CD8-positive, alpha-beta T cell (primary cell): ENCODE measurements at regions of chr17 and their contacts with region 1.

Region 1: GRCh38 chr17:39621523-39622379 is 5.0 kb upstream of the PPP1R1B start:
- DNase-seq: peak; percentile 78 to 96 (median 87)
- ATAC-seq: peak; percentile 79
- H3K4me3 ChIP-seq: peak overlapping the region in 1 of 2 experiments; percentile 27
- H3K4me3 Mint-ChIP-seq: peak overlapping the region; percentile 77
- H3K27ac ChIP-seq: peak overlapping the region in 1 of 2 experiments; percentile 17
- H3K27ac Mint-ChIP-seq: peak overlapping the region; percentile 87
- H3K4me1 ChIP-seq: peaks cover 36% of the 10 kb centered on the region
- H3K4me1 Mint-ChIP-seq: peaks cover 23% of the 10 kb centered on the region
- H3K27me3 ChIP-seq: peaks cover 8 to 10% of the 10 kb centered on the region in 2 experiments
- H3K27me3 Mint-ChIP-seq: peaks cover 14% of the 10 kb centered on the region
- CTCF ChIP-seq: peak; percentile 100

Region 2: GRCh38 chr17:39553341-39553945 is 68.3 kb before region 1 on chr17:
- CTCF ChIA-PET with region 1: interaction called, 68 read pairs
- POLR2A ChIA-PET with region 1: interaction called, 3 read pairs
- intact Hi-C with region 1: loop called in 1 of 2 experiments (anchors 1 kb)
- DNase-seq: no peak
- ATAC-seq: no peak
- H3K4me3 ChIP-seq: no peak overlapping the region
- H3K4me3 Mint-ChIP-seq: no peak overlapping the region
- H3K27ac ChIP-seq: no peak overlapping the region
- H3K27ac Mint-ChIP-seq: no peak overlapping the region
- H3K4me1 ChIP-seq: no peaks in the 10 kb centered on the region
- H3K4me1 Mint-ChIP-seq: no peaks in the 10 kb centered on the region
- H3K27me3 ChIP-seq: no peaks in the 10 kb centered on the region
- H3K27me3 Mint-ChIP-seq: no peaks in the 10 kb centered on the region
- CTCF ChIP-seq: no peak

Region 3: DNA sequence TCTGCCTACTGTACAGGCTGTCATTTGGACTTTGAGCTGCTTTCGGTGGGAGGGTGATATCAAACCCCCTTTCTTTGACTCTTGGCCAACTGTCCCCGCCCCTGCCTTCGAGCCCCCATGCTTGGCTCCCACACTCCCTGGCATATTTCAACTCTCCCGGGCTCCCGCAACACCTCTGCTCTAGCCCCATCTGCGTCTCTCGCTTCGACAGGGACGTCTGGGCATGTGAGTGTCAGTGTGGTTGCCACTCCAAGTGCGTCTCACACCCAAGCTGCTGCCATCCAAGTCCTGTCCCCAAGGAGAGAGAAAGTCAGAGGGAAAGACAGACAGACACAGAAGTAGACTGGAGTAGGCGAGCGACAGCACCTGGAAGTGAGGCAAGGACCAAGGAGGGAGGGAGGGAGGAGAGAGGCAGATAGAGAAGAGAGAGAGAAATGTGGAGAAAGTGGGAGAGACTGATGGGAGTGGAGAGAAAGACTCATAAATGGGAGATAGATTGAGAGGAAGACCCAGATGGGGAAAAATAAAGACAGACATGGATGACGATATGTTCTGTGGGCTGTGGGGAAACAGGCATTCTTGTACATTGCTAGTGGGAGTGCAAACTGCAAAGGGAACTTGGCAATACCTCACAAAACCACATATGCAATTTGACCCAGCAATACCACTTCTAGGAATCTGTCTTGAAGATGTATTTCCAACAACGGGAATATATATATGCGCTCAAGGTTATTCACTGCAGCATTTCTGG is 27.0 kb after region 1 on chr17:
- CTCF ChIA-PET with region 1: interaction called, 263 read pairs
- POLR2A ChIA-PET with region 1: no interaction called
- intact Hi-C with region 1: no loop called
- DNase-seq: no peak
- ATAC-seq: no peak
- H3K4me3 ChIP-seq: no peak overlapping the region
- H3K4me3 Mint-ChIP-seq: no peak overlapping the region
- H3K27ac ChIP-seq: no peak overlapping the region
- H3K27ac Mint-ChIP-seq: peak overlapping the region; percentile 67
- H3K4me1 ChIP-seq: peaks cover 18% of the 10 kb centered on the region
- H3K4me1 Mint-ChIP-seq: peaks cover 52% of the 10 kb centered on the region
- H3K27me3 ChIP-seq: no peaks in the 10 kb centered on the region
- H3K27me3 Mint-ChIP-seq: no peaks in the 10 kb centered on the region
- CTCF ChIP-seq: no peak

Region 4: DNA sequence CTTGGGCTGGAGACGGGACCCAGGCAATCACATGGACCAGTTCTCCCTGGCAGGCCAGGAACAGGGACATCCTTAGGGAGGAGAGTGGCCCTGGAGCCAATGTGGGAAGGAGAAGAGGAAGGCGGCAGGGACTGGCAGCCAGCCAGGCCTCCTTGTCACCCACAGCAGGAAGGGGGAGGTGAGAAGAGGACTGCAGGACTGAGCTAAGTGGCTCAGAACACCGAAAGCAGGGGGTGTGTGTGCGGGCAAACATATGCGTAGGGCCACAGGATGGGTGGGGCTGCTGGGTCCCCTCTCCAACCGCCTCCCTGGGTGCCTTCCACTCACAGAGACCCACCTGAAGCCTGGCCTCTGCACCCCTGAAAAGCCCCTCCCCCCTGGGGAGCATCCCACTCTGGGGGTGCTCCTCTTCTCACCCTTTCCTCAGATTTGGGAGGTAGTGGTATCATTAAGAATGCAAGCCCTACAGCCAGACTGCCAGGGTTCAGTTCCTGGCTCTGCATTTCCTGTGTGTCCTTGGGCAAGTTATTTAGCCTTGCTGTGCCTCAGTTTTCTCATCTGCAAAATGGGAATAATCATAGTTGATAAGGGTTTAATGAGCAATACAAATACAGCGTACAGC is 54.6 kb after region 1 on chr17:
- CTCF ChIA-PET with region 1: interaction called, 205 read pairs
- POLR2A ChIA-PET with region 1: interaction called, 3 read pairs
- intact Hi-C with region 1: loop called in 1 of 2 experiments (anchors 1 kb)
- DNase-seq: peak; percentile 24 to 89 (median 61)
- ATAC-seq: peak; percentile 83
- H3K4me3 ChIP-seq: no peak overlapping the region
- H3K4me3 Mint-ChIP-seq: peak overlapping the region; percentile 38
- H3K27ac ChIP-seq: peak overlapping the region; percentile 48 to 88
- H3K27ac Mint-ChIP-seq: peak overlapping the region; percentile 81
- H3K4me1 ChIP-seq: peaks cover 69% of the 10 kb centered on the region
- H3K4me1 Mint-ChIP-seq: peaks cover 69% of the 10 kb centered on the region
- H3K27me3 ChIP-seq: no peaks in the 10 kb centered on the region
- H3K27me3 Mint-ChIP-seq: no peaks in the 10 kb centered on the region
- CTCF ChIP-seq: no peak

Region 5: DNA sequence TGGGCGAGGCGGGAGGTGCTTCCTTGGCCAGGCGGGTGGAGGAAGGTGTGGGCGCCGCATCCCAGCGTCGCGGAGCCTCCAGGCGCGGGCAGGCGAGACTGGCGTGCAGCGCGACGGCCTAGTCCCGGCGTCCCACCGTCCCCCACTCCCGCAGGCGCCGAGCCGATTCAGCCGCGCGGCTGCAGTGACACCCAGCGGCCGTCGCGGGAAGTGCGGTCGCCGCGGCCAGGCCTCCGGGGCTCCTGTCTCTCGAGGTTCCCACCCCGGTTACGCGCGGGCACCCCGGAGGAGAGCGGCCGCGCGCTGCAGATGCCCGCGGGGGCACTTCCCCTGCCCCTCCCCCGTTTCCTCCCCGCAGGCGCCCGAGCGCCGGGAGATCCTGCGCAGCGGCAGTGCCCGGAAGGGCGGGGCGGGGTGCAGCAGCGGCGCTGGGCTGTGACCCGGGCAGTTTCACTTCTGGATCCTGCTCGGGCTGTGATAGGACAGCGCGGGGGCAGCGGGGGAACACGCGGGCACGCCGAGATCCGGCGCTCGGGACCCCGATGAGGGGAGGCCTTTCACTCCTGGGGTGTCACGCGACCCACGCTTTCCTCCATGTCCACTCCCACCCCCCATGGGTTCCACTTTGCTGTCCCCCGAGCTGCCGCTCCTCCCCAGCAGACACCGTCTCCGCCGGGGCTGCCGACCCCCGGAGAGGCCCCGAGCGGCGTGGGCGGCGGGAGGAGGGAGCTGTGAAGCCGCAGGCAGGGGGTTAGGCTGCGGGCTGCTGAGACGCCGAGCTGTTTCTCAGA is 132.6 kb after region 1 on chr17:
- CTCF ChIA-PET with region 1: interaction called, 110 read pairs
- POLR2A ChIA-PET with region 1: interaction called, 8 read pairs
- intact Hi-C with region 1: loop called (anchors 1 kb)
- DNase-seq: peak; percentile 95 to 99 (median 97)
- ATAC-seq: peak; percentile 74
- H3K4me3 ChIP-seq: peak overlapping the region; percentile 64 to 75
- H3K4me3 Mint-ChIP-seq: peak overlapping the region; percentile 78
- H3K27ac ChIP-seq: peak overlapping the region; percentile 93 to 97
- H3K27ac Mint-ChIP-seq: peak overlapping the region; percentile 98
- H3K4me1 ChIP-seq: peaks cover 56% of the 10 kb centered on the region
- H3K4me1 Mint-ChIP-seq: peaks cover 59% of the 10 kb centered on the region
- H3K27me3 ChIP-seq: no peaks in the 10 kb centered on the region
- H3K27me3 Mint-ChIP-seq: no peaks in the 10 kb centered on the region
- CTCF ChIP-seq: peak; percentile 91

Region 6: DNA sequence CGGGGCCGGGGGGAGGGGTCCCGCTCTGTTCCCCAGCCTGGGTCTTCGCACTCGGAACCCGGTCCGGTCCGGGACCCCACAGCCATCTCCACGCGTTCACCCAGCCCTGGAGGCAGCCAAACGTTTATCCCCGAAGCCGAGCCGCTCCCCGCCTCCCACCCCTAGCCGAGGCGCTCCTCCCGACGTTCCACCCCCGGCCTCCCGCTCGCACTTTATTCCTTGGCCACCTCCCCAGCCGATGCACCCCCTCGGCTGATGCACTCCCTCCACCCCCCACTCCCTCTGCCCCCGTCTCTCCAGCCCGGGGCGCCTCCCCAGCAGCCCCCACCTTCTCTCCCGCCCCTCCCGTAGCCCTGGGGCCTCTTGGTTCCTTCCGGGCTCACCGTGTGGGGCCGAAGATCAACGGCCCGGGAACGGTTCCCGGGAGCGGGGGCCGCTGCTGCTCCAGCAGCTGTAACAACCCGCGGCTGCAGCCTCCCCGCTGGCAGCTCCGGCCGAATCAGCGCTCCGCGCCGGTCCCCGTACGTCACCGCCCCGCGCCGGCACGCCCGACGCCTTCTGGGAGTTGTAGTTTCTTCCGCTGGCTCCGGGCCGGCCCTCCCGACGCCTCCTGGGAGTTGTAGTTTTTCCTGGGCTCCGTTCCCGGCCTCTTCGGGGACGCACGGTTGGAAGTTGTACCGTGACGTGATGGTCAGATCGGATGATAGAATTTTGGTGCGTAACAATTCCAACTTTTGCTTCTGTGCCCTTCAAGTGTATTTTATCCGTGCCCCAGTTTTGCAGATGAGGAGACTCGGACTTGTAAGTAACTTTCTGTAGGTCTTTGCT is 305.6 kb after region 1 on chr17 and contains the starts of genes LRRC3C and ORMDL3:
- CTCF ChIA-PET with region 1: interaction called, 5 read pairs
- POLR2A ChIA-PET with region 1: interaction called, 3 read pairs
- intact Hi-C with region 1: loop called (anchors 1 to 5 kb)
- DNase-seq: peak; percentile 80 to 96 (median 91)
- ATAC-seq: peak; percentile 70
- H3K4me3 ChIP-seq: peak within 1 kb of the TSS; percentile 87 to 90
- H3K4me3 Mint-ChIP-seq: peak within 1 kb of the TSS; percentile 96
- H3K27ac ChIP-seq: peak within 1 kb of the TSS; percentile 70 to 71
- H3K27ac Mint-ChIP-seq: peak within 1 kb of the TSS; percentile 91
- H3K4me1 ChIP-seq: peaks cover 50% of the 10 kb centered on the region
- H3K4me1 Mint-ChIP-seq: peaks cover 42% of the 10 kb centered on the region
- H3K27me3 ChIP-seq: no peaks in the 10 kb centered on the region
- H3K27me3 Mint-ChIP-seq: no peaks in the 10 kb centered on the region
- CTCF ChIP-seq: no peak
- total RNA-seq, gene LRRC3C: not detected
- total RNA-seq, gene ORMDL3: 136 to 140 TPM